Esophagus squamous epithelium (tissue), 5 donors: ENCODE measurements at regions of chr4 and their contacts with region 1.

Region 1: GRCh38 chr4:163484906-163485305 is 9.6 kb upstream of the TMA16 start:
- DNase-seq: no peak
- H3K4me3 ChIP-seq: no peak overlapping the region
- H3K27ac ChIP-seq: no peak overlapping the region
- H3K4me1 ChIP-seq: no peaks in the 10 kb centered on the region
- H3K27me3 ChIP-seq: no peaks in the 10 kb centered on the region
- CTCF ChIP-seq: peak in 5 of 6 experiments; percentile 15 to 56 (median 37)
- POLR2A ChIP-seq: no peak

Region 2: DNA sequence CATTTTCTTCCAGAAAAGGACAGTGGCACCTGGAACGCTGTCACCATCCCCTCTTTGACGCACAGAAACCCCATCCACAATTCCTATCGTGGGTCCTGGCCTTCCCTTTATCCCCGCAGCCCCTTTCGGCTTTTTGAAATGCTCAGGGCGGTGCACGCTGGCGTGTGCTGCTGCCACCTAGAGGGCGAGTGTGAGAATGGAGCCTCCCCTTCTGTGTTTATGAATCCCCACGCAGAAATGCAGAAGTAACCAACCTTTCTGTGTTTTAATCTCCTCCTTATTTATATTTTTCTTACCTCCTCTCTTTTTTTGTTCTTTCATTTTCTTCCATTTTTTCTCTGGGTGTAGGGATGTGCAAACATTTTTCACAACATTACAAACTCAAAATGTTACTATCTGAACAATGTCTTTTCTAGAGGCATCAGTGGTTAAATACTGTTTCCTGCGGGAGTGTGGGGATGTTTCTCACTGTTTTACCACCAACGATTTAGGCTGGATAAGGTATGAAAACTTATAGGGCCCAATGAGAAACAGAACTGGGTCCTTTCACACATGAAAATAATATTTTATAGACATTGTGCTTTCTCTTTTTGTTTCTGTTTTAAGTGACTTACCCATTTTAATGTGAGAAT is 59.6 kb after region 1 on chr4:
- intact Hi-C with region 1: loop called (anchors 10 kb)
- DNase-seq: no peak
- H3K4me3 ChIP-seq: peak overlapping the region; percentile 9 to 57 (median 21)
- H3K27ac ChIP-seq: no peak overlapping the region
- H3K4me1 ChIP-seq: peaks cover 0 to 8% (median 0%) of the 10 kb centered on the region in 3 donors
- H3K27me3 ChIP-seq: no peaks in the 10 kb centered on the region
- CTCF ChIP-seq: peak; percentile 71 to 90 (median 78)
- POLR2A ChIP-seq: no peak

Region 3: DNA sequence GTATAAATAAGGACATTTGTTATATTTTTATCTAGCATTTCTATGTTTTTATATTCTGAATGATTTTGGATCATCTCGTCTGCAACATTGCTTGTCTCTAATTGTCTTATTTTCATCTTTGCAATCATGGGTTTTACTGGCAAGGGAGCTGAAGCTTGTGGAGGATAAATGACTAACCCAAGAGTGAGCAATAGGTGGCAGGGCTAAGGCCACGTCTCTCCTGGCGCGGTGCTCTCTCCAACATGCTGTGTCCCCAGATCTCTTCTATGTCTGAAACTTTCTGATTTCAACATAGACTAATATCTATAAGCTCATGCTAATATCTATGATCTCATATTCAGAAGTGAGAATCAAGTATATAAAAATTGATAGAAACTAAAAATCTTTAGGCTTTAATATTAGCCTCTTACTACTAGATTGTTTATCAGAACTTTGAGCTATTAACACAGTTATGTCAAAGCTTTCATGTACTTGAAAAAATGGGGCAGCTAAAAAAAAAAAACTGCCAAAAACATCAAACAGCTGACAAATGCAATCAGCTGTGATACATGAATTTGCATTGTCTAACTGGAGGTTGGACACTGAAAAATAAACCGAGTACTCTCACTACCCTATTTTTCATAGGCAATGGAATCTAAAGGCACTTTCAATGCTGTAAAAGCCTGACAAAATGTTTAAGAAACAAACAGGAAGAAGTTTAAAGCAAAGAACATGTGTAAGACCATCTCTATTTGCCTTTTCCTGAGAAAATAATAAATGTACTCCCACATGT is 178.7 kb after region 1 on chr4:
- intact Hi-C with region 1: no loop called
- DNase-seq: no peak
- H3K4me3 ChIP-seq: no peak overlapping the region
- H3K27ac ChIP-seq: no peak overlapping the region
- H3K4me1 ChIP-seq: no peaks in the 10 kb centered on the region
- H3K27me3 ChIP-seq: no peaks in the 10 kb centered on the region
- CTCF ChIP-seq: no peak
- POLR2A ChIP-seq: no peak